ENCODE measurements at regions of chr13 and their contacts with region 1.

Region 1: DNA sequence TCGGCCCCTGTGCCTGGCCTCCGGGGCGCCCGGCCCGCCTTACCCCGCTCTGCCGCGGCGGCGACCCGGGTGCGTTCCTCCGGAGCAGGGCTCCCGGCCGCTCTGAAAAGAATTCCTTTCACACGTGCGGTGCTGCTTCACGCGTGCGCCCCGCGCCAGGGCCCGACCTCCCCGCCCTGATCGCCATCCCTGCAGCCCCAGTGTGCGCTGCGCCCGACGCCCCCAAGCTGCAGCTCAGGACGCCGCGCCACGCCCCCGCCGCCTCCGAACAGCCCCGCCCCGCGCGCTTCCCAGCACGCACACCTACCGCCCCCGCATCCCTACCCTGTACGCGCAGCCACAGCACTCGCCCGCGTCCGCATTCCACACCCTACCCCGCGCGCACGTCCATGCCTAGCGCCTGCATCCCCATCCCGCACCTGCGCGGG is at the start of gene GJA3:
- DNase-seq: peak in 1 of 2 experiments; percentile 5
- H3K4me3 ChIP-seq: peak within 1 kb of the TSS; percentile 47
- H3K27ac ChIP-seq: no peak within 1 kb of the TSS
- H3K4me1 ChIP-seq: peaks cover 4% of the 10 kb centered on the region; the same call in 1 of the 2 replicates
- H3K27me3 ChIP-seq: peaks cover 10% of the 10 kb centered on the region; the same call in 1 of the 2 replicates
- CTCF ChIP-seq: no peak
- total RNA-seq, gene GJA3: 0.15 TPM in 1 of 2 replicates, not detected in the other

Region 2: GRCh38 chr13:19984430-19985218 is 176.2 kb before region 1 on chr13:
- CTCF ChIA-PET with region 1: no interaction called
- POLR2A ChIA-PET with region 1: no interaction called
- intact Hi-C with region 1: loop called (anchors 5 kb)
- DNase-seq: no peak
- H3K4me3 ChIP-seq: no peak overlapping the region
- H3K27ac ChIP-seq: no peak overlapping the region
- H3K4me1 ChIP-seq: no peaks in the 10 kb centered on the region
- H3K27me3 ChIP-seq: no peaks in the 10 kb centered on the region
- CTCF ChIP-seq: peak; percentile 75

Region 3: GRCh38 chr13:20090349-20090748 is 70.5 kb before region 1 on chr13:
- CTCF ChIA-PET with region 1: no interaction called
- POLR2A ChIA-PET with region 1: no interaction called
- intact Hi-C with region 1: loop called (anchors 1 kb)
- DNase-seq: no peak
- H3K4me3 ChIP-seq: no peak overlapping the region
- H3K27ac ChIP-seq: no peak overlapping the region
- H3K4me1 ChIP-seq: no peaks in the 10 kb centered on the region
- H3K27me3 ChIP-seq: no peaks in the 10 kb centered on the region
- CTCF ChIP-seq: peak; percentile 49

Region 4: GRCh38 chr13:20127577-20128466 is 33.0 kb before region 1 on chr13:
- CTCF ChIA-PET with region 1: no interaction called
- POLR2A ChIA-PET with region 1: no interaction called
- intact Hi-C with region 1: loop called (anchors 5 kb)
- DNase-seq: peak; percentile 57 to 62
- H3K4me3 ChIP-seq: peak overlapping the region; percentile 72
- H3K27ac ChIP-seq: peak overlapping the region; percentile 65
- H3K4me1 ChIP-seq: 0 out of 2 replicates have a peak, but pooled peaks cover 10% of the 10 kb centered on the region
- H3K27me3 ChIP-seq: no peaks in the 10 kb centered on the region
- CTCF ChIP-seq: peak; percentile 43; the same call in 1 of the 2 replicates